ENCODE measurements at regions of chr16 and their contacts with region 1.

Region 1: GRCh38 chr16:84672276-84673202 is 24.2 kb downstream of the KLHL36 start:
- H3K4me3 Mint-ChIP-seq: no peak overlapping the region
- H3K27ac Mint-ChIP-seq: no peak overlapping the region
- H3K4me1 Mint-ChIP-seq: peaks cover 10% of the 10 kb centered on the region
- H3K27me3 Mint-ChIP-seq: peaks cover 4% of the 10 kb centered on the region

Region 2: DNA sequence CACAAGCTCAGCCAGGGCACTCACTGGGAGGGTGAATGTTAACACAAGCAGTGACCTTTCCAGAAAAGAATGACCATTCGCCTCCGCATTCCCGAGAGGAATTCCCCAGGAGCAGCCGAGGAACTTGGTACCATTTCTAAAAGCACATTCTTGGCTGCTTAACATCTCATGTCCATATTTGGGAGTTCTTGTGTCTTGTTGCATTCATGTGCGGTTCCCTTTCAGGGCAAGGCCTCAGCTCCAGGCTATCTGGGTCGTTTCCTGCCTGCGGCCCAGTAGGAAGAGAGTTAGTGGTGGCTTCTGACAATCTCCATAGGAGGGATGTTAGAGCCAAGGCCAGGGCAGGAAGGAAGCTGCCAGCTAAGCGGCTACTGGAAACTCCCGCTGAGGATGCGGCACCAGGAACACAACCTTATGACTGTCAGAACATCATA is 140.2 kb before region 1 on chr16:
- intact Hi-C with region 1: no loop called
- H3K4me3 Mint-ChIP-seq: no peak overlapping the region
- H3K27ac Mint-ChIP-seq: peak overlapping the region; percentile 50
- H3K4me1 Mint-ChIP-seq: peaks cover 61% of the 10 kb centered on the region
- H3K27me3 Mint-ChIP-seq: peaks cover 21% of the 10 kb centered on the region

Region 3: DNA sequence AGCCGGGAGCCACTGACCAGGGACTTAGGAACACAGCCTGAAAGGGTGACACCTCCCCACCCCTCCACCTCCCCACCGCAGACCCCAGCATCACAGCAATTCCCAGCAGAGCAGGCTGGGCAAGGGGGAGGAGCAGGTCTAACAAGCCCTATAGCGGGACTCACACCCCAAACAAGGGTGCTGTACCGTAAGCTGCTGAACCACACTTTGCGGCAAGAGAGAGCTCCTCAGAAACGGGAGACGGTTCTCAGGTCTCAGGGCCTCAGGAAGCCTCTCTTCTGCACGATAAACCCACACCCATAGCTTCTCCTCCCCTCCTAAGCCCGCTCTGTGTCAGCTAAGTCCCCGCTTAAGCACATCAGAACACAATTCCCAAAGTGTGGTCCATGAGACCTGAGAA is 43.0 kb before region 1 on chr16:
- intact Hi-C with region 1: no loop called
- H3K4me3 Mint-ChIP-seq: no peak overlapping the region
- H3K27ac Mint-ChIP-seq: no peak overlapping the region
- H3K4me1 Mint-ChIP-seq: peaks cover 32% of the 10 kb centered on the region
- H3K27me3 Mint-ChIP-seq: no peaks in the 10 kb centered on the region

Region 4: DNA sequence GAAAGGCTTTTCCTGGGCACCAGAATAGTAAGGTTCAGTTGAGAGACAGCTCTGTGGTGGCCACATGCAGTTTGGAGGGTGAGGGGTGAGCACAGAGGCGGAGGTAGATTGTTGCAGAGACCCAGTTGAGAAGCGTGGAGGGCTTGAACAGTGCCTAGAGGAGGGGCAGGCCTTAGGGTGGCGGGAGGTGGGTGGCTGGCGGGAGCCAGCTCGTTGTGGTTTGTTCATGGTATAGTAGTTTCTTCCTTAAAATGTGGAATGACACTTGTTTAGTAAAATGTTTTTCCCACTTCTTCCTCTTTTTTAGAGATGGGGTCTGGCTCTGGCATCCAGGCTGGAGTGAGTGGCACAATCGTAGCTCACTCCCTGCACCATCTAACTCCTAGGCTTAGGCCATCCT is 41.5 kb after region 1 on chr16:
- intact Hi-C with region 1: no loop called
- H3K4me3 Mint-ChIP-seq: peak overlapping the region; percentile 30
- H3K27ac Mint-ChIP-seq: peak overlapping the region; percentile 66
- H3K4me1 Mint-ChIP-seq: peaks cover 75% of the 10 kb centered on the region
- H3K27me3 Mint-ChIP-seq: no peaks in the 10 kb centered on the region

Region 5: GRCh38 chr16:84726079-84726668 is 53.6 kb after region 1 on chr16:
- intact Hi-C with region 1: loop called (anchors 1 kb)
- H3K4me3 Mint-ChIP-seq: peak overlapping the region; percentile 59
- H3K27ac Mint-ChIP-seq: peak overlapping the region; percentile 77
- H3K4me1 Mint-ChIP-seq: peaks cover 72% of the 10 kb centered on the region
- H3K27me3 Mint-ChIP-seq: no peaks in the 10 kb centered on the region